ENCODE measurements at regions of chr1 and their contacts with region 1.

Region 1: GRCh38 chr1:53510215-53510614 is 51.0 kb downstream of the DMRTB1 start:
- DNase-seq: no peak
- H3K4me3 ChIP-seq: no peak overlapping the region
- H3K27ac ChIP-seq: no peak overlapping the region
- H3K4me1 ChIP-seq: no peaks in the 10 kb centered on the region
- H3K27me3 ChIP-seq: no peaks in the 10 kb centered on the region
- CTCF ChIP-seq: no peak

Region 2: DNA sequence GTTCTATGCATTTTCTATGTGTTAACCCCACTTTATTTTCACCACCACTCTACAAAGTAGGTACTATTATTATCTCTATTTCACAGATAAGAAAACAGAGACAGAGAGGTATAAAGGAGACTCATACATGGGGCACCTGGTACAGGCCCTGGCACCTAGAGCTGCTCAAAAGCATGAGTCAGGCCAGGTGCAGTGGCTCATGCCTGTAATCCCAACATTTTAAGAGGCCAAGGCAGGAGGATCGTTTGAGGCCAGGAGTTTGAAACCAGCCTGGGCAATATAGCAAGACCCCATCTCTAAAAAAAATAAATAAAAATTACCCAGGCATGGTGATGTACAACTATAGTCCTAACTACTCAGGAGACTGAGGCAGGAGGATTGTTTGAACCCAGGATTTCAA is 193.0 kb after region 1 on chr1:
- CTCF ChIA-PET with region 1: no interaction called
- POLR2A ChIA-PET with region 1: interaction called, 25 read pairs
- intact Hi-C with region 1: no loop called
- DNase-seq: no peak
- H3K4me3 ChIP-seq: no peak overlapping the region
- H3K27ac ChIP-seq: no peak overlapping the region
- H3K4me1 ChIP-seq: no peaks in the 10 kb centered on the region
- H3K27me3 ChIP-seq: no peaks in the 10 kb centered on the region
- CTCF ChIP-seq: no peak